Transverse colon (tissue), 4 donors: ENCODE measurements at regions of chr15 and their contacts with region 1.

Region 1: GRCh38 chr15:85485956-85486567 is 105.7 kb downstream of the AKAP13 start:
- DNase-seq: peak; percentile 59
- H3K4me3 ChIP-seq: no peak overlapping the region
- H3K27ac ChIP-seq: no peak overlapping the region
- H3K4me1 ChIP-seq: peaks cover 0 to 27% (median 6%) of the 10 kb centered on the region in 4 donors
- H3K27me3 ChIP-seq: no peaks in the 10 kb centered on the region
- CTCF ChIP-seq: peak; percentile 61 to 87 (median 79)
- EP300 ChIP-seq: no peak
- POLR2A ChIP-seq: no peak

Region 2: GRCh38 chr15:85330901-85331588 is 155.0 kb before region 1 on chr15:
- in situ Hi-C with region 1: loop called in 2 of 4 experiments (anchors 25 kb)
- intact Hi-C with region 1: no loop called
- DNase-seq: peak; percentile 95
- H3K4me3 ChIP-seq: no peak overlapping the region
- H3K27ac ChIP-seq: peak overlapping the region; percentile 83 to 88 (median 86)
- H3K4me1 ChIP-seq: peaks cover 10 to 32% (median 22%) of the 10 kb centered on the region in 4 donors
- H3K27me3 ChIP-seq: no peaks in the 10 kb centered on the region
- CTCF ChIP-seq: peak; percentile 75 to 90 (median 82)
- EP300 ChIP-seq: peak; percentile 93
- POLR2A ChIP-seq: peak; percentile 16

Region 3: DNA sequence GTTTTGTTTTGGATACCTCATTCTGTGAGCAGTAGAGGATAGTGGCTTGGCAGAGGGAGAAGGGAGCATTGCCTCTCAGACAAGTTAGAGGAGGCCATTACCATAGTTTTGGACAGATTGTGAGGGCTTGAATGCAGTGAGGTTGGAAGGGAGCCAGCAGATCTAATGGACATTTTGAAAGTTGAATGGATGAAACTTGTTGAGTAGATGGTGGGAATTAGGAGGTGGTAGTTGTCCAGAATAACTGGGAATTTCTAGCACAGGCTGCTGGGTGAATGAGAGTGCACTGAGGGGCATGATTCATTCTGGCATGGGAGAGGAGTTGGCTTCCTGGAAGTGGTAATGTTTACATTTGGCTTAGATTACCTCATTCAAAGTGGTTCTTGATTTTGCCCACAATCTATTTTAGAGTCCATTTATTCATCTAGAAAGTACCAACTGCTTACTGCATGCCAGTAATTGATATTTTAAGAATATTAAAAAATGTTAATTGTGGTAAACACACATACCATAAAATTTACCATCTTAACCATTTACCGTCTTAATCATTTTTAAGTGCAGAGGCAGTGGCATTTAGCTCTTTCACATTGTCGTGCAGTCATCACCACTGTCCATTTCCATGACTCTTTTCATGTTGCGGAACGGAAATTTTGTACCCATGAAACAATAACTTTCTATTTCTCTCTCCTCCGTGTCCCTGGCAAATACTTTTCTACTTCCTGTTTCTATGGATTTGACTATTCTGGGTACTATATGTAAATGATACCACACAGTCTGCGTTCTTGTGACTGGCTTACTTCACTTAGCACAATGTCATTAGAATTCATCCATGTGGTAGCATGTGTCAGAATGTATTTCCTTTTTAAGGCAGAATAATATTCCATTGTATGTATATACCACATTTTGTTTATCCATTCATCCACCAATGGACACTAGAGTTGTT is 78.0 kb before region 1 on chr15:
- in situ Hi-C with region 1: no loop called
- intact Hi-C with region 1: no loop called
- DNase-seq: no peak
- H3K4me3 ChIP-seq: no peak overlapping the region
- H3K27ac ChIP-seq: peak overlapping the region in 1 of 4 donors; percentile 49
- H3K4me1 ChIP-seq: peaks cover 28 to 54% (median 31%) of the 10 kb centered on the region in 4 donors
- H3K27me3 ChIP-seq: no peaks in the 10 kb centered on the region
- CTCF ChIP-seq: no peak
- EP300 ChIP-seq: no peak
- POLR2A ChIP-seq: no peak

Region 4: DNA sequence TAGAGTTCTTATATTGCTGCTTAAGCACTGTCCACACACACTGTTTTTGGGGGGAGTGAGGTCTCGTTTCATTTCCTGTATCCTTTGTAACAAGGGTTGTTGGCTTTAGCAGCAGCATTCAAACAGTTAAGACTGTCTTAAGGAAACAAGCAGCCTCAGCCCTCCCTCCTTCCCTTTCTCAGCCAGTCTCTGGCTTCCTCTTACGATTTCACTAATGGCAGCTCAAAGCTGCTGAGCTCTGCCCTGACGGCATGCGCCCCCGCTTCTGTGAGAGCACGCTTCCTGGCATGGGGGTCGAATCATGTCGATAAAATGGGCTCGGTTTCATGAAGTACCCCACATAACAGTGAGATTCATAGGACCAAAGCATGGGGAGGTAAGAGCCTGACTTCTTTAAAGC is 203.7 kb after region 1 on chr15:
- in situ Hi-C with region 1: loop called in 2 of 4 experiments (anchors 25 kb)
- intact Hi-C with region 1: no loop called
- DNase-seq: peak; percentile 56
- H3K4me3 ChIP-seq: peak overlapping the region in 3 of 4 donors; percentile 7 to 45 (median 26)
- H3K27ac ChIP-seq: peak overlapping the region; percentile 56 to 79 (median 68)
- H3K4me1 ChIP-seq: peaks cover 6 to 31% (median 9%) of the 10 kb centered on the region in 4 donors
- H3K27me3 ChIP-seq: no peaks in the 10 kb centered on the region
- CTCF ChIP-seq: no peak
- EP300 ChIP-seq: no peak
- POLR2A ChIP-seq: peak; percentile 68

Region 5: GRCh38 chr15:85831415-85832113 is 345.5 kb after region 1 on chr15:
- in situ Hi-C with region 1: loop called in 3 of 4 experiments (anchors 10 to 25 kb)
- intact Hi-C with region 1: no loop called
- DNase-seq: peak; percentile 73
- H3K4me3 ChIP-seq: no peak overlapping the region
- H3K27ac ChIP-seq: peak overlapping the region in 3 of 4 donors; percentile 20 to 43 (median 40)
- H3K4me1 ChIP-seq: peaks cover 0 to 17% (median 6%) of the 10 kb centered on the region in 4 donors
- H3K27me3 ChIP-seq: no peaks in the 10 kb centered on the region
- CTCF ChIP-seq: peak; percentile 47 to 65 (median 58)
- EP300 ChIP-seq: no peak
- POLR2A ChIP-seq: no peak

Region 6: GRCh38 chr15:85858586-85859375 is 372.7 kb after region 1 on chr15:
- in situ Hi-C with region 1: no loop called
- intact Hi-C with region 1: no loop called
- DNase-seq: peak; percentile 80
- H3K4me3 ChIP-seq: no peak overlapping the region
- H3K27ac ChIP-seq: no peak overlapping the region
- H3K4me1 ChIP-seq: peaks cover 0 to 14% (median 5%) of the 10 kb centered on the region in 4 donors
- H3K27me3 ChIP-seq: peaks cover 22% of the 10 kb centered on the region
- CTCF ChIP-seq: peak; percentile 69 to 82 (median 77)
- EP300 ChIP-seq: no peak
- POLR2A ChIP-seq: no peak